Sigmoid colon (tissue), 7 donors: ENCODE measurements at regions of chrX and their contacts with region 1.

Region 1: DNA sequence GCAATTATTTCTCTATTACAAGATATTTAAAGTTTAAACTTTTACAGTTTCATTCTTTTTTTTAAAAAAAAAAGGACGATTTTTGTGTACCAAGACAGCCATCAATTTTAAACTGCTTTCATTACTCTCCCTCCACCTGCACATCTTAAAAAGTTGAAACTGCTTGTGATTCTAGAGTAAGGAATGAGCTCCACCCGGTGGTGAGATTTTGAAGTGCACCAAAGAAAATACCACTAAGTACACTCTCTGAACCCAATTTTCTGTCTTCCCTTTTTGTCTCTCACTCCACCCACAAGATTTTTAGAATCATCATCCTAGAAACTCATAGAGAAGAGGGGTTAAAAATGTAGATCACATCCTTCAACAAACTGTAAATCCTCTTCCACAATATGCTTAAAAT is 91.3 kb upstream of the WDR44 start:
- DNase-seq: no peak
- H3K4me3 ChIP-seq: no peak overlapping the region
- H3K27ac ChIP-seq: no peak overlapping the region
- H3K4me1 ChIP-seq: no peaks in the 10 kb centered on the region
- H3K27me3 ChIP-seq: no peaks in the 10 kb centered on the region
- CTCF ChIP-seq: peak; percentile 35 to 63 (median 46)
- EP300 ChIP-seq: no peak
- POLR2A ChIP-seq: no peak

Region 2: DNA sequence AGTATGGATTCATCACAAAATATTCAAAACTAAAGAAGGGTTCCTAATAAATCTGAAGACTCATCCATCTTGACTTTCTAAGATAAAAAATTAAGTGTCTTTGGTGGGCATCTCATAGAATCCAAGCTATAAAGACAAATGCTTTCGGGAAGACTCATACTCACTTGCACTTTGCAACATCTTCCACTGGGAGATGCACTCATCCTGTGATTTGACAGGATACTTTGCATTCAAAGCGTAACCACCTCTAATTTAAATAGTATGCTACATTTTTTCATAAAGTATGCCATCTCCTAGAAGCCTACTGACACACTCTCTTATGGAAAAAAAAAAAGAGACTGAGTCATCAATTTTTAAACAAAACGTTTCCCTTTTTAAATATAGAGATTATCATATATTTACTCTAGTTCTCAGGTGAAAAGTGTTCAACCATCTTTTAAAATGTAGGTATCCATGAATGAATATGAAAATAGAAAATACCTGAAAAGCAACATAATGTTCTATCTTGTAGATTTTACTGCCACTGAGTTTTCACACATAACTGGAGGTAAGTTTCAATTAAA is 257.6 kb before region 1 on chrX:
- intact Hi-C with region 1: loop called (anchors 10 kb)
- DNase-seq: no peak
- H3K4me3 ChIP-seq: no peak overlapping the region
- H3K27ac ChIP-seq: no peak overlapping the region
- H3K4me1 ChIP-seq: no peaks in the 10 kb centered on the region
- H3K27me3 ChIP-seq: no peaks in the 10 kb centered on the region
- CTCF ChIP-seq: no peak
- EP300 ChIP-seq: no peak
- POLR2A ChIP-seq: no peak

Region 3: GRCh38 chrX:118420462-118420861 is 165.9 kb after region 1 on chrX:
- intact Hi-C with region 1: no loop called
- DNase-seq: no peak
- H3K4me3 ChIP-seq: no peak overlapping the region
- H3K27ac ChIP-seq: peak overlapping the region; percentile 41 to 71 (median 63)
- H3K4me1 ChIP-seq: peaks cover 0 to 7% (median 0%) of the 10 kb centered on the region in 4 donors
- H3K27me3 ChIP-seq: no peaks in the 10 kb centered on the region
- CTCF ChIP-seq: no peak
- EP300 ChIP-seq: no peak
- POLR2A ChIP-seq: no peak